Activated B cell treated with CpG ODN at 0.5 μM for 24 hours (primary cell): ENCODE measurements at regions of chr17 and their contacts with region 1.

Region 1: DNA sequence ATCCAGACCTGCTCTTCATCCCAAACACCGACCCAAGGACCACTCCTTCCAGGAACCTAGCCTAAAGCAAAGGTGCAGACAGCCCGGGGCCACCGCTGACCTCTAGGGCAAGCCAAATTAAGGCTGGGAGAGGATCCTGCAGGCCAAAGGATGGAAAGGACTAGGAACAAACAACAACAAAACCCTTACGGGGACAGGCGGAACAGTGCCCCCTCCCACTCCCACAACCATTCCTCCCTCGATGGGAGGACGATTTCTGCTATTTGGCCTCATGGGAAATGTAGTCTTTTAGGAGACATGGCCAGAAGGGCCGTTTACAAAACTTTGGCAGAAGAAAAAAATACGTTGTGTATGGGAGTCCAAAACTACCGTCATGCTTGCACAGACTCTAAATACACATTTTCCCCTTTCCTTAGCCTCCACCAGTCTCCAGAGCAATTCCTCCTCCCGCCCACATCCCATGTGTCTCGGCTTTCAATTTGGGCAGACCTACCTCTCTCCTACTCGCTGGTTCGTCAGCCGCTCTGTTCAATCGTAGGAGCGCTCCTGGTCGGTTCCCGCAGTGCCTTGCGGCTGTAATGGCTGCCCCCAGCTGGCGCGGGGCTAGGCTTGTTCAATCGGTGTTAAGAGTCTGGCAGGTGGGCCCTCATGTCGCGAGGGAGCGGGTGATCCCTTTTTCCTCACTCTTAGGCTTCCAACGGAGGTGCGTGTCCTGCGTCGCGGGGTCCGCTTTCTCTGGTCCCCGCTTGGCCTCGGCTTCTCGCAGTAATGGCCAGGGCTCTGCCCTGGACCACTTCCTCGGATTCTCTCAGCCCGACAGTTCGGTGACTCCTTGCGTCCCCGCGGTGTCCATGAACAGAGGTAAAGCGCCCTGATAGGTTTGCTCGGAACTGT is at the start of gene ERAL1:
- DNase-seq: peak; percentile 67
- ATAC-seq: peak; percentile 99
- H3K4me3 Mint-ChIP-seq: peak within 1 kb of the TSS; percentile 89
- H3K27ac Mint-ChIP-seq: peak within 1 kb of the TSS; percentile 80
- H3K4me1 Mint-ChIP-seq: peaks cover 25% of the 10 kb centered on the region
- H3K27me3 Mint-ChIP-seq: no peaks in the 10 kb centered on the region
- CTCF ChIP-seq: no peak
- total RNA-seq, gene ERAL1: 47.6 and 49.2 TPM in 2 replicates

Region 2: DNA sequence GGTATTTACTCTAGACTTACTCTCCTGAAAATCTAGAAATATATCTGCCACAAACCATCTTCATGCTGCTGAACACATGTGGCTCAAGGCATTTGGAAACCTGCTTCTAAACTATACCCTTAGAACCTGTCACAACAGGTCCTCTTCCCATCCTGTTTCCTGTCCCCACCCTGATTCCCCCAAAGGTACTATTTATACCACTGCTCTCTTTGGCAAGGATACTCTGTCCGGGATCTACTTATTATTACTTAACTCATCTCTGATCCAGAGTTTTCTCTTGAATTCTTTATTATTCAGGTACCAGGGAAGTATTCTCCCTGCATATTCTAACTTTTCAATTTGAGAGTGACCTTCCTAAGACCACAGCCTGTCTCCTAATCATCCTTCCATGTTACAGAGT is 77.5 kb before region 1 on chr17:
- CTCF ChIA-PET with region 1: no interaction called
- POLR2A ChIA-PET with region 1: no interaction called
- intact Hi-C with region 1: no loop called
- DNase-seq: no peak
- ATAC-seq: no peak
- H3K4me3 Mint-ChIP-seq: no peak overlapping the region
- H3K27ac Mint-ChIP-seq: no peak overlapping the region
- H3K4me1 Mint-ChIP-seq: peaks cover 32% of the 10 kb centered on the region
- H3K27me3 Mint-ChIP-seq: no peaks in the 10 kb centered on the region
- CTCF ChIP-seq: no peak

Region 3: DNA sequence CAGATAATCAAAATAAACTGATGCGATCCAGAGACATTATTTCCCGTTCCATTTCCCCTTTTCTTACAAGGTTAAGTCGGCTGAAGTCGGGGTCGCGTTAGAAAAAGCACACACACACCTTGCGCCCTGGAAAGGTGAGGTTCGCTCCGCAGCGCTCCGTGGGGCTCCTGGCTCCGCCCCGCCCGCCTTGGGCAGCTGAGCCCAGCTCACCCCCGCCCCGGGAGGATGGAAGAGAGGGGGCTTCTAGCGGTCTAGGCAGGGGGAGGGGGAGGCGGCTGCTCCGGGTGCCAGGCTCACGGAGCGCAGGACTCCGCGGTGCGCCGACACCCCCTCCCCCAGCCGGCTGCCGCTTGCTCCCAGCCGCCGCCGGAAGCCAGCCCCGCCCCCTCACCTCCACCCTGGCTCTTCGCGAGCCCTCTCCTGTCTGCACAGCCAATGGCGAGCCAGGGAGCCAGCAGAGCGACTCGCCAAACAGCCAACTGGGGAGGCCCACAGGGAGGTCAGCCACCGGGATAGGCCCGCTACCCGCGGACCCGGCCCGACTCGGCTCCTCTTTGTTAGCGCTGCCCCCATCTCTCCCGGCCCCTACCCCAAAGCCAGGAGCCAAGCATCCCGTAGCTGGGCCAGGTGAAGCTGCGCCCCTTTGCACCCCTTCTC is 42.5 kb before region 1 on chr17:
- CTCF ChIA-PET with region 1: no interaction called
- POLR2A ChIA-PET with region 1: no interaction called
- intact Hi-C with region 1: loop called (anchors 1 kb)
- DNase-seq: peak; percentile 89
- ATAC-seq: peak; percentile 100
- H3K4me3 Mint-ChIP-seq: peak overlapping the region; percentile 87
- H3K27ac Mint-ChIP-seq: peak overlapping the region; percentile 83
- H3K4me1 Mint-ChIP-seq: peaks cover 31% of the 10 kb centered on the region
- H3K27me3 Mint-ChIP-seq: no peaks in the 10 kb centered on the region
- CTCF ChIP-seq: no peak

Region 4: GRCh38 chr17:28896884-28897768 is 42.4 kb after region 1 on chr17 and contains the start of gene FLOT2:
- CTCF ChIA-PET with region 1: interaction called, 9 read pairs
- POLR2A ChIA-PET with region 1: interaction called, 13 read pairs
- intact Hi-C with region 1: no loop called
- DNase-seq: peak; percentile 66
- ATAC-seq: peak; percentile 58
- H3K4me3 Mint-ChIP-seq: peak within 1 kb of the TSS; percentile 96
- H3K27ac Mint-ChIP-seq: peak within 1 kb of the TSS; percentile 86
- H3K4me1 Mint-ChIP-seq: peaks cover 81% of the 10 kb centered on the region
- H3K27me3 Mint-ChIP-seq: no peaks in the 10 kb centered on the region
- CTCF ChIP-seq: no peak
- total RNA-seq, gene FLOT2: 303 and 321 TPM in 2 replicates

Region 5: DNA sequence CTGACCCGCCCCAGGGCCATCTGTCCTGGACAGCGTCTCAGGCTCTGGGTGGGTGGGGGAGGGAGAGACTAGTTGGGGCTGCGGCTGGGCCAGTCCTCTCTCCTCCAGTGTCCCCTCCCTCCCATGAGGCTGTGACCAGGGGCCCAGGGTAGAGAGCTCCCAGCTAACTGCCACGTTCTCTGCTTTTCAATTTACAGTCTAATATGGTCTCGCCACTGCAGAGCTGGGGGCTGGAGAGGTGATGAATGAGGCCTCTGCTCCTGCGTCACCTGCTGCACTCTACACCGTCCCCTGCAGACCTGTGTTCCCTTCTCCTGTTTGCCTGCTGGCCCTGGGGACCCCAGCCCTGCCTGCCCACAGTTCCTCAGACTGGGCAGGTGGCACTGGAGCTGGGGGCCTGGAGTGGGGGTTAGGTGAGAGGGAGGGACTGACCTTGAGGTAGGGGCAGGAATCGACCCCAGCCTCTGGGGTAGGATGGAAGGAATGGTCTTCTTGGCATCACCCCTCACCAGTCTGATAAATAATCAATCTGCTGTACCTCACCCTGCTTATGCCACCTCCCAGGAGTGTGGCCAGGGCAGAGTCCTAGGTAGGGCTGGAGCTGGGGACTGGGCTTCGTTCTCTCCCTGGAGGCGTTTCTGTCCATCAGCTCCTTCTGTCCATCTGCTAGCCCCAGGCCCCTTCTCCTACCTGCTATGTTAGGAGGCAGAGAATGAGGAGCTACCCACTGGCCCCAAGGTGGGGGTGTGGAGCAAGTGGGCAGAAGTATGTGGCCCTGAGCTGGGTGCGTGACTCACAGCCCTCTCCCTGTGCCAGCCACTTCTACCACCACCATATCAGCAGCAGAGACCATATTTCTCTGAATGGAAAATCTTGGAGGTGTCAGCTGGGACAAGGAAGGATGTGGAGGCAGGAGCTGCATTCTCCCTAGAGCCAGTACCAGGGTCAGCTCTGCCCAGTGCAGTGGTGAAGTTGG is 138.2 kb after region 1 on chr17:
- CTCF ChIA-PET with region 1: no interaction called
- POLR2A ChIA-PET with region 1: no interaction called
- intact Hi-C with region 1: no loop called
- DNase-seq: no peak
- ATAC-seq: no peak
- H3K4me3 Mint-ChIP-seq: no peak overlapping the region
- H3K27ac Mint-ChIP-seq: no peak overlapping the region
- H3K4me1 Mint-ChIP-seq: no peaks in the 10 kb centered on the region
- H3K27me3 Mint-ChIP-seq: peaks cover 13% of the 10 kb centered on the region
- CTCF ChIP-seq: no peak